ENCODE measurements at regions of chr9 and their contacts with region 1.

Region 1: DNA sequence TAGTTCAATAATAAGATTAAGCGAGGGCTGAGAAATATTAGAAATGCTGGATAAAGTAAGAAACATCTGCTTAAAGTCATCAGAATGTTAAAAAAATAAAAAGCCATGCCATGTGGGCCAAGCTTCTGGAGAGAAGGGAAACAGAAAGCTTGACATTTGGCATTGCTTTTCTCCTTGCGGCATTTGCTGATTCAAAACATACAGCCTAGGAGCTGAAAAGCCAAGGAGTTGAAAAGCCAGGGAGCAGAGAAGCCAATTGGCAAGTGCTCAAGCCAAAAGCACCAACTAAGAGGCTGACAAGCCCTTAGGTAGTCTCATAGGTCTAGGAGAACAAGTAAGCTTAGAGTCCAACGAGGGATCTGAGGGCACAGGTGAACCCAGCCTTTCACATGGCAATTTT is 754.3 kb downstream of the TLE4 start:
- DNase-seq: no peak
- ATAC-seq: no peak
- H3K4me3 Mint-ChIP-seq: no peak overlapping the region
- H3K27ac Mint-ChIP-seq: no peak overlapping the region
- H3K4me1 Mint-ChIP-seq: no peaks in the 10 kb centered on the region
- H3K27me3 Mint-ChIP-seq: no peaks in the 10 kb centered on the region
- CTCF ChIP-seq: no peak

Region 2: DNA sequence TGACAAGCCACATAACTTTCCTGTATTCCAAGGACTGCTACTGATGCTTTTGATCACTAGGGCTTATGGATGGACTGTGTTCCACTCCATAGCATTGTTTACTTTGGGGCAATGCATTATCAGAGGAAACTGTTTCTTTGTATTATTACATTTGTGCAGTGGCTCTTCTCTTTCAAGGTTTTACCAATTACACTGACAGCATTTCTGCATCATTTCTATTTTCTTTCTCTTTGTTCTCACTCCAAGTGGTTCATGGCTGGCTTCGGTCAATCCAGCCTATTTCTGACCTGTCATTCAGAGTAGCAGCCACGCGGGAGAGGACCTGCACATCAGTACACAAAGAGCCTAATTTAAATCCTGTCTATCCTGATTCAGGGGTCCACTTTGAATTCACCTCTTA is 43.3 kb before region 1 on chr9:
- CTCF ChIA-PET with region 1: no interaction called
- POLR2A ChIA-PET with region 1: no interaction called
- intact Hi-C with region 1: loop called (anchors 10 kb)
- DNase-seq: no peak
- ATAC-seq: no peak
- H3K4me3 Mint-ChIP-seq: no peak overlapping the region
- H3K27ac Mint-ChIP-seq: no peak overlapping the region
- H3K4me1 Mint-ChIP-seq: no peaks in the 10 kb centered on the region
- H3K27me3 Mint-ChIP-seq: no peaks in the 10 kb centered on the region
- CTCF ChIP-seq: no peak

Region 3: DNA sequence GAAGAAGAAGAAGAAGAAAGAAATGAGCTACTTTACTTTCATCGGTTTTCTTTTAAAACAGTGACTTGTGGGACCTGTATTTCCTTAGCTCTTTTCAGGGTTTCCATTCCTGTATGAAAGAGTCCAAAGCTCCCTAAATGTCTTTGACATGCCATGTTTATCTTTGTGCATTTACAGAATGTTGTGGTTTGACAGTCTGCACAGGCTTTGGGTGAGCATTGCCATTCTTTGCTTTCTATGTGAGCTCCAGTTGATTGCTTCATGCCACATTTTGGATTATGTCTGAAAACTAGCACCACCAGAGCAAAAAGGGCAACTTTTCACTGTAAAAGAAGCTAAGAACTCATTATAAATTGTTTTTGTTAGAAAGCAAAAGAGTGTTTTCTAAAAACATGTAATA is 21.0 kb before region 1 on chr9:
- CTCF ChIA-PET with region 1: no interaction called
- POLR2A ChIA-PET with region 1: no interaction called
- intact Hi-C with region 1: no loop called
- DNase-seq: no peak
- ATAC-seq: no peak
- H3K4me3 Mint-ChIP-seq: no peak overlapping the region
- H3K27ac Mint-ChIP-seq: no peak overlapping the region
- H3K4me1 Mint-ChIP-seq: peaks cover 4% of the 10 kb centered on the region
- H3K27me3 Mint-ChIP-seq: no peaks in the 10 kb centered on the region
- CTCF ChIP-seq: no peak